ENCODE measurements at regions of chr9 and their contacts with region 1.

Region 1: GRCh38 chr9:129177791-129178559 is at the start of gene IER5L:
- DNase-seq: peak; percentile 96
- ATAC-seq: peak; percentile 85
- H3K4me3 Mint-ChIP-seq: peak within 1 kb of the TSS; percentile 82
- H3K27ac Mint-ChIP-seq: peak within 1 kb of the TSS; percentile 63
- H3K4me1 Mint-ChIP-seq: peaks cover 9% of the 10 kb centered on the region
- H3K27me3 Mint-ChIP-seq: peaks cover 9% of the 10 kb centered on the region
- total RNA-seq, gene IER5L: 4.9 to 6.1 TPM

Region 2: DNA sequence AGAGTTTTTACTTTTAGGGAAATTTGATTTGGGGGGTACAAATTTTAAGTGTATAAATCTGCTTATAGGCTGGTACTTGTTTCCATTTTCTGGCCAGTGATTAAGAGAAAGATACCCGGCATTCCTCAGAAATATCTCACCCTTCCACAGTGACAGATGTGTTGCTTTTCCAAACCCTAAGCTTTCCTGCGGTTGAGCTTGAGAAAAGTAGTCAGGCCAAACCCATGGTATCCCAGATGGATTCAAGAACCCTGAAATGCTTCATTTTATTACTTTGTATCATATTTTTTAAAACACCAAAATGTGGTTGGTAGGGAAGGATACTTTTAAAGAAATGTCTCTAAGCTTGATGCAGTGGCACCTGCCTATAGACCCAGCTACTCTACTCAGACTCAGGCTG is 602.1 kb before region 1 on chr9:
- CTCF ChIA-PET with region 1: no interaction called
- DNase-seq: no peak
- ATAC-seq: no peak
- H3K4me3 Mint-ChIP-seq: no peak overlapping the region
- H3K27ac Mint-ChIP-seq: no peak overlapping the region
- H3K4me1 Mint-ChIP-seq: peaks cover 2% of the 10 kb centered on the region
- H3K27me3 Mint-ChIP-seq: no peaks in the 10 kb centered on the region

Region 3: GRCh38 chr9:128688512-128689292 is 489.3 kb before region 1 on chr9 and contains the start of gene SET:
- CTCF ChIA-PET with region 1: no interaction called
- DNase-seq: peak; percentile 95
- ATAC-seq: peak; percentile 83
- H3K4me3 Mint-ChIP-seq: peak within 1 kb of the TSS; percentile 97
- H3K27ac Mint-ChIP-seq: peak within 1 kb of the TSS; percentile 99
- H3K4me1 Mint-ChIP-seq: peaks cover 67% of the 10 kb centered on the region
- H3K27me3 Mint-ChIP-seq: no peaks in the 10 kb centered on the region
- total RNA-seq, gene SET: 436 to 623 TPM

Region 4: GRCh38 chr9:129131300-129132145 is 46.5 kb before region 1 on chr9:
- CTCF ChIA-PET with region 1: interaction called, 33 read pairs
- DNase-seq: peak; percentile 89
- ATAC-seq: peak; percentile 97
- H3K4me3 Mint-ChIP-seq: no peak overlapping the region
- H3K27ac Mint-ChIP-seq: no peak overlapping the region
- H3K4me1 Mint-ChIP-seq: peaks cover 9% of the 10 kb centered on the region
- H3K27me3 Mint-ChIP-seq: no peaks in the 10 kb centered on the region

Region 5: GRCh38 chr9:129166623-129167557 is 11.1 kb before region 1 on chr9:
- CTCF ChIA-PET with region 1: interaction called, 13 read pairs
- DNase-seq: no peak
- ATAC-seq: peak; percentile 39
- H3K4me3 Mint-ChIP-seq: no peak overlapping the region
- H3K27ac Mint-ChIP-seq: no peak overlapping the region
- H3K4me1 Mint-ChIP-seq: peaks cover 28% of the 10 kb centered on the region
- H3K27me3 Mint-ChIP-seq: peaks cover 4% of the 10 kb centered on the region

Region 6: DNA sequence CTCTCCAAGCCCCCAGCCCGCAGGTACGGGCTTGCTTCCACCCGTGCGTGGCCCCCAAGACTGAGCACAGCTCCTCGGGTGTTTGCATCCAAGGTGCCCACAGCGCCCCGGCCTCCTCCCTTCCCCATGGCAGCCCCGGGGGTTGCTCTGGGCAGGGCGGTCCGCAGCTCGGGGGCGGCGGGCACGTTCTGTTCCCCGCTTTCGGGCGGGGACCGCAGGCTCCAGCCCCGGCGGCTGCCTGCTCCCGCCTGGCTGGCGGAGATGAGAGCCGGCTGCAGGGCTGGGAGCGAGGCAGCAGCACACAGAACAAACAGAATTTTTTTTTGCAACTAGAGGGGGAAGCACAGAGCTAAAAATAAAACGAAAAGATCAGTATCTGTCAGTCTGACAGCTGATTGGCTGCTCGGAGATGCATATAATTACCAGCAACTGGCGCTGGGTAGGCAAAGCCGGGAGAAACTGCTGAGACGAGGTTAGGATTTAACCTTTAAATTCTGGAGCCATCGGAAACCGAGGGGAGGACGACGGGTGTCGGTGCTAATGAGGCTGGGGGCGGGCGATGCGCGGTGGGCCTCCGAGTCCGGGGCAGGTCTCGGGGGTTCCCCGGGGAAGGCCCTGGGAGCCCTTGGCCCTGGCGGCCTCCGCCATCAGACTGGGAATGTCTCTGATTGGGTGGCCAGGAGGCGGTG is 142.7 kb after region 1 on chr9:
- CTCF ChIA-PET with region 1: interaction called, 22 read pairs
- DNase-seq: peak; percentile 60
- ATAC-seq: peak; percentile 84
- H3K4me3 Mint-ChIP-seq: peak overlapping the region; percentile 51
- H3K27ac Mint-ChIP-seq: no peak overlapping the region
- H3K4me1 Mint-ChIP-seq: peaks cover 9% of the 10 kb centered on the region
- H3K27me3 Mint-ChIP-seq: peaks cover 8% of the 10 kb centered on the region

Region 7: DNA sequence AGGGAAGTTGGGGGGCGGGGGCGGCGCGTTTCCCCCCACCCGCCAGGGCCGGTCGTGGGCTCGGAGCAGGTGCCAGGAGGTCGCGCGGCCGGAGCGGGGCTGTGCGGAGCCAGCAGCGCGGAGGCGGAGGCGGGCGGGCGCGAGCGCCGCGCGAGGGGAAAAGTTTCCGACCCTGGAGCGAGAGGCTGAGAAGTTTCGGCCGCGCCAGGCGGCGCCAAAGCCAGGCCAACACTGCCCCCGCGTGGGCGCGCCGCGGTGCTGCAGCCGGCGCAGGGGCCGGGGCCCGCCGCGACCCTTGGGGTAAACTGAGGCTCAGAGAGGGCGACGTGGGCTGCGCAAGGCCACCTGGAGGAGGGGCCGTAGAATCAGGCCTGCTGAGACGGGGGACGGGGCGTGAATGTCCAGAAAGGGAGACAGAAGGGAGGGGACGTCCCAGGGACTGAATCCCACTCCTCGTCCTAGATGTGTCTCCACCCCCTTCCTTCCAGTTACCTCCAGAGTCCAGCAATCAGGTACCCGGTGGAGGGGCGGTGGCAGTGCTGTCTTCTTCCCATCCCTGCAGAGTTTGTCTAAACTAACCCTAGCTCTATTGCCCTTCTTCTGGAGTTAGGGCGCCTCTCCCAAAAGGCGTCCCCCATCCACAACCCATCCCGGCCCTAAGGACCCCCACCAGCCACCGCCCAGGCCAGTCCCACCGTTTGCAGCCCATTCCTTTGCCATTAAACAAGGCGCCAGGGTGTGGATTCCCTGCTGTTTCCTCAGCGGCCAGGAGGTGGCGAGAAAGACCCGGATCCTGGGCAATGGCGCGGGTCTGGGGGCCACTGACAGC is 432.7 kb after region 1 on chr9:
- CTCF ChIA-PET with region 1: interaction called, 29 read pairs
- DNase-seq: peak; percentile 78
- ATAC-seq: peak; percentile 77
- H3K4me3 Mint-ChIP-seq: peak overlapping the region; percentile 53
- H3K27ac Mint-ChIP-seq: peak overlapping the region; percentile 69
- H3K4me1 Mint-ChIP-seq: peaks cover 39% of the 10 kb centered on the region
- H3K27me3 Mint-ChIP-seq: peaks cover 4% of the 10 kb centered on the region

Measured in activated CD8-positive, alpha-beta memory T cell treated with anti-CD3 and anti-CD28 coated beads, Interleukin-2, amount 10 ng/mL, durations not matched to agents 7 days and 5 days (primary cell).